ENCODE measurements at regions of chr7 and their contacts with region 1.

Region 1: DNA sequence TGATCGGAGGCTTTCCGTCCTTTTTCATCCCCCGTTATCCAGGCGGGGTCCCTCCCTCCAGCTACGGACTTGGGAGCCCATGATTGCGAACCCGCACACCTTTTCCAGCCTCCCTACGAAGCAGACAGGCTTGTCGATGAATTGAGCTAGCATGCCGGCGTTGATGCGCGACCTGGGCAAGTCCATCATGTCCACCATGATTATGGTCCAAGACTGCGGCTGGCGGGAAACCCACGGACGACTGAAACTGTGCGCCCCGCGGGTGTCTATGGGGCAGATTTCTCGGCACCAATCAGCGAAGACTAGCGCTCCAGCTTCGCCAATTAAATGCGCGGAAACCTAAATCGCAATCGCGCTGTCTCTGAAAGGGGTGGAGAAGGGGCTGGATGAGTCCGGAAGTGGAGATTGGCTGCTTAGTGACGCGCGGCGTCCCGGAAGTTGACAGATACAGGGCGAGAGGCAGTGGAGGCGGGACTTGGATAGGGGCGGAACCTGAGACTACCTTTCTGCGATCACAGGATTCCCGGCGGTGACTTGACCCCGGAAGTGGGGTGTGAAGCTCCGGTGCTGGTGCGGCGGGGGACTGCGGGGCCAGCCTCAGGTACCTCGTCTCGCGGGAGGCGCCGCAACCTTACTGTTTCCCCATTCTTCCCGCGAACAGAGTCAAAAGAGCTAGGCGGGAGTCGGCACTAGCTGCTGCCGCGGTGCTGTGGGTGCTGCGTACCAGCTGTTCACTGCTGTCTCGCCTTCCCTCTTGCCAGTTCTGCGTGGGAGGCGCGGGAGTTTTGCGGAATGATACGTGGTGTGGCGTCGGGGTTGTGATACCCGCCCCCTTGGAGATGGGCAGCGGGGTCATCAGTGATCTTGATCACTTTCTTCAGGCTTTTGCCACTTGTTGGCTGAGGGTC is at the start of gene UMAD1:
- DNase-seq: peak; percentile 99
- H3K4me3 ChIP-seq: peak within 1 kb of the TSS; percentile 73 to 87 (median 78)
- H3K27ac ChIP-seq: peak within 1 kb of the TSS; percentile 88 to 93 (median 90)
- H3K4me1 ChIP-seq: peaks cover 20 to 21% (median 20%) of the 10 kb centered on the region in 4 donors
- H3K27me3 ChIP-seq: no peaks in the 10 kb centered on the region
- CTCF ChIP-seq: no peak
- EP300 ChIP-seq: no peak
- POLR2A ChIP-seq: peak; percentile 27
- total RNA-seq, gene UMAD1: 6.1 to 11.2 (median 9.3) TPM

Region 2: DNA sequence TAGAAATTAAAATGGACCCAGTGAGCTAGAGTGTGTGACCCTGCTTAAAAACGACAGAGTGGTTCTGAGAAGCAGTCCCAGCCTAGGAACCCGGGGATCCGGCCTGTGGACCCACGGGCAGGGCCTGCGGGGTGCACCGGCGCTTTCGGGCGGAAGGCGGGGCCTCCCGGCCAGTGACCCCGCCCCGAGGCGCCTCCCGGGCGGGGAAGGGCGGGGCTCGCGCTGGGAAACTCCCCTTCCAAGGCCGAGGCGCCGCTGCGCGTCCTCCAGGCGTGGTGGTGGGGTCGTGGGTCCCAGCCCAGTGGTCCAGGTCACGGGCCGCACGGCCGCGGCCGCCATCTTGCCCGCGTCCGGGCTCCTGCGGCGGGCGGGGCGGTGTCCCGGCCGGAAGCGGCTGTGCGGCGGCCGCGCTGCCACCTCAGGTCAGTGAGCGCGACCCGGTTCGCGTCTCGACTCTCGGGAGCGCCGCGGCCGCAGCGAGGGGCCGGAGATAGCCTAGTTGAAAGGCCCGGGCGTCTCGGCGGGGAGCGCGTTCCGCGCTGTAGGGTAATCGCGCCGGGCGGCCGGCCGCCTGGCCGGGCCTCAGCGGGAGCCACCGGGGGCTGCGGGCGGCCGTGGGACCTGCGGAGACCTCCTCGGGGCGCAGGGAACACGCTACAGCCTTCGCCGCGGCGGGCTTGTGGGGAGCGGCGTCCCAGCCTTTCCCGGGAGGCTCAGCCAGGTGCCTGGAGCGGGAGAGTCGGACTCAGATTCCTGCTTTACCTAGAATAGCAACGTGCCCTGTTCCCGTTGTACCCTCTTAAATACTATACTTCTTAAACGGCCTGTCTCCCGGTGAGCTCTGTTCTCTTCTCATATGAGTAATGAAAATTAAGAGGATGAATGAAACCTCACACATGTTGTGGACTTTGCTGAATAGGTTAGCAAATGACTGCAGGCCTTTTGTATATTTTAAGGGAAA is 73.5 kb before region 1 on chr7 and contains the start of gene MIOS:
- intact Hi-C with region 1: loop called (anchors 5 kb)
- DNase-seq: peak; percentile 93
- H3K4me3 ChIP-seq: peak within 1 kb of the TSS; percentile 79 to 95 (median 91)
- H3K27ac ChIP-seq: peak within 1 kb of the TSS; percentile 85 to 98 (median 94)
- H3K4me1 ChIP-seq: peaks cover 12 to 39% (median 32%) of the 10 kb centered on the region in 4 donors
- H3K27me3 ChIP-seq: no peaks in the 10 kb centered on the region
- CTCF ChIP-seq: no peak
- EP300 ChIP-seq: no peak
- POLR2A ChIP-seq: peak; percentile 23
- total RNA-seq, gene MIOS: 17.5 to 32.5 (median 25.7) TPM

Region 3: DNA sequence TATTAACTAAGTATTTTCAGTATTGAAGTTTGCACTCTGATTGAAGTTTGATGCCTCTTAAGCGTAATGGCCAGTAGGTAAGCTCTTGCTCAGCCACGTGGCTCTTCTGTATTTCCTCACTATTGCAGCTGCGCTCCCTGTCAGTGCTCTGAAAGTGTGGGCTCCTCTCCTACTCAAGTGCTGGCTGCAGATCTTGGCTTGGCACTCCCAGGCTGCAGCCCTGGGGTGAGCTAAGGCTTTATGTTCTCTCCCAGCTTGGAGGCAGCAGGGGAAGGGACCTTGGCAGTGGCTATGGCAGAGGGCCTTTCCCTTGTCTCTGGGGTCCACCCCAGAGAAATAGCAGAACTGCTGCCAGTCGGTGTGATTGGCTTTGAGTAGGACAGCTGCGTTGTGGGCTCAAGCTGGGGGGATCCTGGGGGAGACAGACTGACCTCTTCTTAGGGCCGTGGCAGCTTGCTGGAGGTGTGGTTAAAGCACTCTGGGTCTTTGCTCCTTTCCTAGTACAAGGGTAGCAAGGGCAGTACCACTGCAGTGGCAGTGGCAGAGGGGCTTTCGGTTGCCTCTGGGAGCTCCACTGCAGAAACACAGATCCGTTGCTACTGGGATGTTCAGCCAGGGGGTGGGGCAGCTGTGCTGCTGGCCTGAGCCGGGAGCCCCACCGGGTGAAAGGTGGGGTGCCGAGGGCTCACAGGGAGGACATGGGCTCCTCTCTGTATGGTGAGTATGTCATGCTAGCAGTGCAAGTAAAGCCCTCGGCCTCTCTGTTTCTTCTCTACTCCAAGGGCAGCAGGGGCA is 428.6 kb after region 1 on chr7:
- intact Hi-C with region 1: no loop called
- DNase-seq: no peak
- H3K4me3 ChIP-seq: no peak overlapping the region
- H3K27ac ChIP-seq: no peak overlapping the region
- H3K4me1 ChIP-seq: peaks cover 0 to 5% (median 0%) of the 10 kb centered on the region in 4 donors
- H3K27me3 ChIP-seq: no peaks in the 10 kb centered on the region
- CTCF ChIP-seq: no peak
- EP300 ChIP-seq: no peak
- POLR2A ChIP-seq: no peak